ENCODE measurements at regions of chr17 and their contacts with region 1.

Region 1: DNA sequence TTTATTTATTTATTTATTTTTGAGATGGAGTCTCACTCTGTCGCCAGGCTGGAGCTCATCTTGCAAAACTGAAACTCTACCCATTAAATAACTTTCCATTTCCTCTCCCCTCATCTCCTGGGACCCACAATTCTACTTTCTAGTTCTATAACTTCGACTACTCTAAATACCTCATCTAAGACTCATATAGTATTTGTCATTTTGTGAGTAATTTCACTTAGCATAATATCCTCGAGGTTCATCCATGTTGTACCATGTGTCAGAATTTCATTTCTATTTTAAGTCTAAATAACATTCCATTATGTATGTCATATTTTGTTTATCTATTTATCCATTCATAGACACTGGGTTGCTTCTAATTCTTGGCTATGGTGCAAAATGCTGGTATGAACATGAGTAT is 5.1 kb upstream of the NT5M start:
- DNase-seq: no peak
- ATAC-seq: no peak
- H3K4me3 ChIP-seq: no peak overlapping the region
- H3K27ac ChIP-seq: no peak overlapping the region
- H3K4me1 ChIP-seq: no peaks in the 10 kb centered on the region
- H3K27me3 ChIP-seq: no peaks in the 10 kb centered on the region
- CTCF ChIP-seq: no peak

Region 2: GRCh38 chr17:17280613-17281549 is 17.2 kb before region 1 on chr17 and contains the start of gene COPS3:
- CTCF ChIA-PET with region 1: no interaction called
- POLR2A ChIA-PET with region 1: interaction called, 11 read pairs
- in situ Hi-C with region 1: no loop called
- intact Hi-C with region 1: no loop called
- DNase-seq: peak; percentile 82
- ATAC-seq: peak; percentile 98
- H3K4me3 ChIP-seq: peak within 1 kb of the TSS; percentile 69 to 75
- H3K27ac ChIP-seq: peak within 1 kb of the TSS; percentile 94
- H3K4me1 ChIP-seq: peaks cover 7% of the 10 kb centered on the region
- H3K27me3 ChIP-seq: no peaks in the 10 kb centered on the region
- CTCF ChIP-seq: no peak
- total RNA-seq, gene COPS3: 73.6 TPM

Region 3: DNA sequence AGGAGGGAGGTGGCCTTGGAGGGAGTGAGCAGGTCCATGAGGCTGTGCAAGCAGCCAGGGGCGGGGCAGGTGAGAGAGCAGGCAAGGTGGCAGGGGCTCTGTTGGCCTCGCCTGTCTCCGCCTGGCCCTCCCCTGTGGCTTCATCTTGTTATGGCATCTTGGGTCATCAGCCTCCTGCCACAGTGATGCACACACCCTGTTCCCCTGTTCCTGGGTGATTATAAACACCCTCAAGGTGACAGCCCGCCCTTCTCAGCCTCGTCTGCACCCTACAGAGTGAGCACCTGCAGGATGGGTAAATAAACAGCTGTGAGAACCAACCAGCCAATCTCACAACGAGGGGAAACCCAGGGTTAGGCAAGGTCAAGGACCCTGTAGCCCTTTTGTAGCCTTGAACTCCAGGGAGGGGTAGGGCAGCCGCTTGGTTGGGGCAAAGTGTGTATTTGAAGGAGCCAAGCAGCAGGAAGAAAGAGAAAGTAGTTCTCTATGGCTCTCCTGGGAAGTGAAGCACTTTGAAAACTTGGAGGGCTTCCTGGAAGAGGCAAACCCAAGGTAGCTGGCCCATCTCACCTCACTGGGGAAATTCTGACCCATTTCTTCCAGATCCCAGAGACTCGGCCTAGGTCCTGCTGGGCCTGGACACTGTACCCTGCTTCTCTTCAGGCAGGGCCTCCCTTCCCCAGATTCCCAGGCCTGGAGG is 65.7 kb after region 1 on chr17:
- CTCF ChIA-PET with region 1: no interaction called
- POLR2A ChIA-PET with region 1: no interaction called
- in situ Hi-C with region 1: no loop called
- intact Hi-C with region 1: no loop called
- DNase-seq: no peak
- ATAC-seq: no peak
- H3K4me3 ChIP-seq: no peak overlapping the region
- H3K27ac ChIP-seq: no peak overlapping the region
- H3K4me1 ChIP-seq: no peaks in the 10 kb centered on the region
- H3K27me3 ChIP-seq: no peaks in the 10 kb centered on the region
- CTCF ChIP-seq: no peak

Measured in Panc1 (cell line).